Vagina (tissue), 2 donors: ENCODE measurements at regions of chr21 and their contacts with region 1.

Region 1: GRCh38 chr21:42973991-42974831 is at the start of gene PKNOX1:
- DNase-seq: peak in 1 of 2 donors; percentile 99
- H3K4me3 ChIP-seq: peak within 1 kb of the TSS; percentile 89 to 97
- H3K27ac ChIP-seq: peak within 1 kb of the TSS; percentile 93
- H3K4me1 ChIP-seq: peaks cover 25% of the 10 kb centered on the region
- H3K27me3 ChIP-seq: no peaks in the 10 kb centered on the region
- CTCF ChIP-seq: no peak
- POLR2A ChIP-seq: peak in 1 of 2 donors; percentile 52
- total RNA-seq, gene PKNOX1: 9.8 TPM

Region 2: DNA sequence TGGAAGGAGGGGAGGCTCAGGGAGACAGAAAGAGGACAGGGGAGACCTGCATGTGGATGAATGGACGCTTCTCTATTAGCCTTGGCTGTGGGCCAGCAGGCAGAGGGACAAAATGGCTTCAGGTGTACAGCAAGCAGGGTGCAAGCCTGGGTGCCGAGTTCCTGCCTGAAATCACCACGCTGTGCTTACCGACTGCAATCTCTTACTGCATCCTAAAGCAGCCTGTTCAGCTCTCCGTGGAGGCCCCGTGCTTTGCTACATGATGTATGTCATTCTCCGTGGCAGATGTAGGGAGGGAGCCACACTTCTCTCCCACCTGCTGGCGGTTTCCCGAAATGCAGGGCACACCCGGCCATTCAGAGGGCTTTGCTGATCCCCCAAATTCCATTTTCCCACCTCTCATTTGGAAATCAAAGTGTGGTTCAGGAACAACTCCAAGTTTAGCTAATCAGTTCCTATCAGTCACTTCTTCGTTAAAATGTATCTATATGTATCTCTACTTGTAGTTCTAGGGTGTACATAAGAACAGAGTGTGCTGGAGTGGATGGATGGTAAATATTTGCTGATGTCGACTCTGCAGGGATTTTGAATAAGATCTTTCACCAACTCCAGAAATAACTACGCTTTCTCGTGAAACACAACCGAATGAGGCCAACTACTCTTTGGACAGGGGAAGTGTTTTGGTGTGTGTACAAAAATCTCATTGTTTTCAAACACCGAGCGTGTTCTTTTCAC is 1928.5 kb before region 1 on chr21:
- intact Hi-C with region 1: no loop called
- DNase-seq: no peak
- H3K4me3 ChIP-seq: no peak overlapping the region
- H3K27ac ChIP-seq: no peak overlapping the region
- H3K4me1 ChIP-seq: no peaks in the 10 kb centered on the region
- H3K27me3 ChIP-seq: no peaks in the 10 kb centered on the region
- CTCF ChIP-seq: no peak
- POLR2A ChIP-seq: no peak

Region 3: DNA sequence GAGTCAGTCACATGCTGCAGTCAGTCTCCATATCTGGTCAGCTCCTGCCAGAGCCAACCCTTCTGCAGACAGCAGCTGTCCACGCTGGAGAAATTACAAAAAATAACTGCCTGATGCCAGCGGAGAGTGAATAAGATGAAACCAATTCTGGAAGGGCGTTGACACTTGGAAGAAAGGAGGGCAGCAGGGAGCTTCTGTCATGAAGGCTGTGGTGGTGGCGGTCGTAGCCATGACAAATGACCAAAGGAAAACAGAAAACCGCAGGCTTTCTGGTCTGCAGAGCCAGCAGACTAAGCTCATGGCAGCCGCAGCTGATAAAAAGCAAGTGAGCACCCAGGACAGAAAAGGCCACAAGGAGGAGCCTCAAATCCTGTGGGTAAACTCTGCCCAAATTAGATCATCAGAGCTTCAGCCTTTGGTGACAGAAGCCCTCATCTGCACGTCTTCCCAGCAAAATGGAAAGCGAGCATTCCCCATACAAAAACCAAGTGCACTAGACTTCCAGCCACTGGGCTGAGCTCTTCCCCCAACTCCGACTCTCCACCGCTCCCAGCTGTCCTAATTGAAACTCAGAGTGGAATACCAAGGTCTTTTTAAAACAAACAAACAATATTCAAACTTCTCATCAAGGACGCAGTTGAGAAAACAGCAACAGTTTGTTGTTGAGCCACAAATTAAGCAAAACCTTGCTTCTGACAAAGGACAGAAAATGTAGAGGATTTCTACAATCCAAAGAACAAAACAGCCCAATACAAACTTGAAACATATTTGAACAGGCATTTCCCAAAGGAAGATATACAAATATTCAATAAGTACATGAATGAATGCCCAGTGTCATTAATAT is 506.8 kb before region 1 on chr21:
- intact Hi-C with region 1: no loop called
- DNase-seq: no peak
- H3K4me3 ChIP-seq: no peak overlapping the region
- H3K27ac ChIP-seq: no peak overlapping the region
- H3K4me1 ChIP-seq: peaks cover 26% of the 10 kb centered on the region
- H3K27me3 ChIP-seq: no peaks in the 10 kb centered on the region
- CTCF ChIP-seq: no peak
- POLR2A ChIP-seq: no peak

Region 4: GRCh38 chr21:42766739-42767560 is 207.3 kb before region 1 on chr21:
- intact Hi-C with region 1: no loop called
- DNase-seq: no peak
- H3K4me3 ChIP-seq: no peak overlapping the region
- H3K27ac ChIP-seq: no peak overlapping the region
- H3K4me1 ChIP-seq: no peaks in the 10 kb centered on the region
- H3K27me3 ChIP-seq: no peaks in the 10 kb centered on the region
- CTCF ChIP-seq: no peak
- POLR2A ChIP-seq: no peak

Region 5: DNA sequence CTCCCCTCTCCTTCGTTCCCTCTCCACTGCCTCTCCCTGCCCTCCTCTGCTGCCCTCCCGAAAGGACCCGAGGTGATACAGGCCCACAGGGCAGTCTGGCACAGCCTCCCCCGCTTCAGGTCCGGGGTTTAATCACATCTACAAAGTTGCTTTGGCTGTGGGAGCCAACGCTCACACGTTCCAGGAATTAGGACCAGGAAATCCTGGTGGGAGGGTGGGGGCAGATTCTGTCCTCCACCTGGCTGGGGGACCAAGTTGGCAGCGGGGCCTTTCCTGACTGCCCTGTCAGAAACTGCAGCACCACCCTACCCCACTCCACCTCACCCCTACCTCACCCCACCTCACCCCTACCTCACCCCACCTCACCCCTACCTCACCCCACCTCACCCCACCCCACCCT is 189.9 kb before region 1 on chr21:
- intact Hi-C with region 1: no loop called
- DNase-seq: no peak
- H3K4me3 ChIP-seq: no peak overlapping the region
- H3K27ac ChIP-seq: peak overlapping the region; percentile 46
- H3K4me1 ChIP-seq: peaks cover 11% of the 10 kb centered on the region
- H3K27me3 ChIP-seq: no peaks in the 10 kb centered on the region
- CTCF ChIP-seq: no peak
- POLR2A ChIP-seq: no peak

Region 6: DNA sequence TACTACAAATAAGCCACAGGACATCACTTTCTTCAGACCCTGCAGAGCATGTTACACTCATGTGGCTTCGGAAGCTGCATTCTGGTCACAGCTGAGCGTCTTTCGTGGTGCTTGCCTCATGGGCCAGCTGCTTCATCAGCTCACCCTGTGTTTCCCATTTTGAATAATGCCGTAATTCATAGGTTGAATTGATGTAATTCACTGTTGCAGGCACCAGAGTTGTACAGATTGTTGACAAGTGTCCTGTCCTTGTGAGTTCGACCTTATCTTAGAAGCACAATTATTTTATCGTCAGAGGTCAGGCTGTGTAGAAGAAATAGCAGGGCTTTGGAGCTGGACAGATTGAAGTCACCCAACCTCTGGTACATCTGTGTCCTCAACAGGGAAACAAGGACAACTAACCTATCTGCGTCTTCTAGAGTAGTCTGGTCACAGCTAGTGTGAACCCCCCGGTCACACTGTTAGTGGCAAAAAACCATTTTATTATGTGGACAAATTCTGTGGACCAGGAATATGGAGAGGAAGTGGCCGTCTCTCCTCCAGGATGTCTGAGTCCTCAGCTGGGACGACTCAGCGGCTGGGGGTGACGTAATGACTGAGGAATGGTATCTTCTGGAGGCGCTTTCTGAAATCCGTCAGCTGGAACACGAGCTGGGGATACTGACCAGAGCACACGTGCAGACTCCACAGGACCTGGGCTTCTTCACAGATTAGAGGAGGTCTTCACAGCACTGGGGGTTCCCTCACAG is 18.0 kb after region 1 on chr21:
- intact Hi-C with region 1: loop called (anchors 2 kb)
- DNase-seq: peak in 1 of 2 donors; percentile 93
- H3K4me3 ChIP-seq: no peak overlapping the region
- H3K27ac ChIP-seq: peak overlapping the region; percentile 69
- H3K4me1 ChIP-seq: peaks cover 32% of the 10 kb centered on the region
- H3K27me3 ChIP-seq: no peaks in the 10 kb centered on the region
- CTCF ChIP-seq: no peak
- POLR2A ChIP-seq: no peak